ENCODE measurements at regions of chr15 and their contacts with region 1.

Region 1: GRCh38 chr15:98428253-98428989 is 219.9 kb upstream of the IGF1R start:
- DNase-seq: peak; percentile 85
- CTCF ChIP-seq: peak; percentile 79

Region 2: GRCh38 chr15:98308117-98308516 is 120.3 kb before region 1 on chr15:
- in situ Hi-C with region 1: loop called (anchors 10 kb)
- DNase-seq: no peak
- CTCF ChIP-seq: no peak

Region 3: GRCh38 chr15:98612490-98613110 is 184.2 kb after region 1 on chr15:
- in situ Hi-C with region 1: no loop called
- DNase-seq: no peak
- CTCF ChIP-seq: no peak

Region 4: DNA sequence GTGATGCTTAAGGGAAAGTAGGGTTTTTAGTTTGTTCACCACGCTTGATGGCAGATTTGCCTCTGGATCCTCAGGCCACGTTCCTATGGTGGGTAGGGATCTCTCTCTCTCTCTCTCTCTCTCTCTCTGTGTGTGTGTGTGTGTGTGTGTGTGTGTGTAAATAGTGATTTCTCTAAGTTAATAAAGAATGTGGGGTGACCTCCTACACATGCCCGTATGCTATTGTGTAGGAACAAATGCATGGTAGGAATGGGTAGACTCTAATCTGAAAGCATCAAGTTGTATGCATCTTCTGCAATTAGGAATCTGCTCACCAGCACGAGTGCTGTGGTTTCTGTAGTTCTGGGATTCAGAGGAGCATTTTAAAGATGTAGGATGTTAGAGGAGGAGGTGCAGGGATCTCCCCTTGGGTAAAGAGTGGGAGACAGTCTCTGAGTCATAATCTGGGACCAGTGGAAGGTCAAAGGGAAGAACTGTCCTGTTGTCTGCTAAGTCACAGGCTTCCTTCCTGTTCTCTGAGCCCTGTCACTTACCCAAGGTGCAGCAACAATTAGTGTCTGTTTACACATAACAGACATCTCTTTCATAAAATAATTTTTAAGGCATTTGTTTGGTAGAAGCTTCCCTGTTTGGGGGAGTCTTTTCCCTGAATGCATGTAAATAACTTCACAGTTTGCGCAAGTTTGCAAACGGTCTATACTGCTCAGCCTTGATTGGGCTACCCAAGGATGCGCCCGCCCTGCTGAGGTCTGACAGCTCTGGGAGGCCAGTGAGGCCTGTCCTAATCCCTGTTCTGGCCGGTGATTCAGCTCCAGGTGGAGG is 359.7 kb after region 1 on chr15:
- in situ Hi-C with region 1: no loop called
- DNase-seq: no peak
- CTCF ChIP-seq: no peak

Measured in GM13977 (cell line).